Ovary (tissue), 10 donors: ENCODE measurements at regions of chr14 and their contacts with region 1.

Region 1: GRCh38 chr14:74612350-74613021 is 449 bp upstream of the LTBP2 start:
- DNase-seq: peak; percentile 82 to 92 (median 85)
- H3K4me3 ChIP-seq: peak overlapping the region; percentile 59
- H3K27ac ChIP-seq: peak overlapping the region; percentile 5 to 51
- H3K4me1 ChIP-seq: peaks cover 13% of the 10 kb centered on the region
- H3K27me3 ChIP-seq: no peaks in the 10 kb centered on the region
- CTCF ChIP-seq: peak; percentile 35 to 91 (median 84)
- EP300 ChIP-seq: no peak
- POLR2A ChIP-seq: no peak

Region 2: GRCh38 chr14:74362361-74362915 is 250.0 kb before region 1 on chr14:
- intact Hi-C with region 1: loop called in 1 of 4 experiments (anchors 5 kb)
- DNase-seq: peak; percentile 73 to 82 (median 76)
- H3K4me3 ChIP-seq: no peak overlapping the region
- H3K27ac ChIP-seq: no peak overlapping the region
- H3K4me1 ChIP-seq: no peaks in the 10 kb centered on the region
- H3K27me3 ChIP-seq: no peaks in the 10 kb centered on the region
- CTCF ChIP-seq: peak; percentile 75 to 84 (median 77)
- EP300 ChIP-seq: no peak
- POLR2A ChIP-seq: no peak

Region 3: DNA sequence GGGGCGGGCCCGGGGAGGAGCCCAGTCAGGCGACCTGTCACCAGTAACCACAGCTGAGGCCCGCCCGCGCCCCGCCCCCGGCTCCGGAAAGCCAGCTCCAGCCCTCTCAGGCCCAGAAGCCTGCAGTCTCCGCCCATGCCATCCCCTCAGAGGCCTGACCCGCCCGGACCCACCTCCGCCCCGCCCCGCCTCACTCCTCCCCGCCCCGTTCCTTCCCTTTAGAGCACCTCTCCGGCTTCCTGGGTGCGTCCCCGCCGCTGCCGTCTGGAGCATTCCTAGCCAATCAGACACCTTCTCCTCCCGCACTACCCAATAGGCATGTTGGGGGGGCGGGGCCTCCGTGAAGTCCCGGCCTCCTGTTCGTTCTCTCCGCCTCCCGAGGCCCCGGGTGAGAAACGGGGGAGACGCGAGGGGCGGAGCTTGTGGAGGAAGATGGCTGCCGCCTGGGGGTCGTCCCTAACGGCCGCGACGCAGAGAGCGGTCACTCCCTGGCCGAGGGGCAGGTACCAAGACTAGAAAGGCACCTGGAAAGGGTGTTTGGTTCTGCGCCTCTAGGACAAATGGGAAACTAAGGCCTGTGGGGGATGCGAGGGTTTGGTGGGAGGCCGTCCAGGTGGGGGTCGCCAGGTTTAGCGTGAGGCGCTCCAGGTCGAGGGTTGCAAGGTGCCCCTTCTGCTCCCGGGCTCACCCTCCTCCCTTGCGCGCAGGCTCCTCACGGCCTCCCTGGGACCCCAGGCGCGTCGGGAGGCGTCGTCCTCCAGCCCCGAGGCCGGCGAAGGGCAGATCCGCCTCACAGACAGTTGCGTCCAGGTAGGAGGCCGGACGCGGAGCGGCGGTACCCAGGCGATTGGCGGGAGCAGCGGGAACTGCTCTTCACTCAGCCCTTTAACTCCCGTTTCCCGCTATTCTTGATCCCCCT is 118.9 kb before region 1 on chr14 and contains the start of gene ISCA2:
- intact Hi-C with region 1: loop called in 1 of 4 experiments (anchors 5 kb)
- DNase-seq: peak; percentile 99
- H3K4me3 ChIP-seq: peak within 1 kb of the TSS; percentile 87
- H3K27ac ChIP-seq: peak within 1 kb of the TSS; percentile 80 to 82
- H3K4me1 ChIP-seq: peaks cover 5% of the 10 kb centered on the region
- H3K27me3 ChIP-seq: no peaks in the 10 kb centered on the region
- CTCF ChIP-seq: no peak
- EP300 ChIP-seq: no peak
- POLR2A ChIP-seq: peak; percentile 85
- total RNA-seq, gene ISCA2: 11.7 to 32.7 (median 26.9) TPM

Region 4: GRCh38 chr14:74501135-74501614 is 111.3 kb before region 1 on chr14:
- intact Hi-C with region 1: loop called in 2 of 4 experiments (anchors 5 kb)
- DNase-seq: peak; percentile 89 to 93 (median 92)
- H3K4me3 ChIP-seq: no peak overlapping the region
- H3K27ac ChIP-seq: no peak overlapping the region
- H3K4me1 ChIP-seq: peaks cover 3% of the 10 kb centered on the region
- H3K27me3 ChIP-seq: no peaks in the 10 kb centered on the region
- CTCF ChIP-seq: peak; percentile 73 to 81 (median 77)
- EP300 ChIP-seq: no peak
- POLR2A ChIP-seq: no peak

Region 5: GRCh38 chr14:74705613-74706500 is 93.4 kb after region 1 on chr14:
- intact Hi-C with region 1: loop called in 2 of 4 experiments (anchors 5 to 10 kb)
- DNase-seq: no peak
- H3K4me3 ChIP-seq: no peak overlapping the region
- H3K27ac ChIP-seq: peak overlapping the region in 1 of 2 donors; percentile 74
- H3K4me1 ChIP-seq: peaks cover 12% of the 10 kb centered on the region
- H3K27me3 ChIP-seq: no peaks in the 10 kb centered on the region
- CTCF ChIP-seq: no peak
- EP300 ChIP-seq: no peak
- POLR2A ChIP-seq: no peak

Region 6: GRCh38 chr14:74712499-74713394 is 100.3 kb after region 1 on chr14 and contains the starts of genes AREL1 and FCF1:
- intact Hi-C with region 1: loop called in 3 of 4 experiments (anchors 2 to 10 kb)
- DNase-seq: peak; percentile 74 to 85 (median 75)
- H3K4me3 ChIP-seq: peak within 1 kb of the TSS; percentile 86
- H3K27ac ChIP-seq: peak within 1 kb of the TSS; percentile 54 to 55
- H3K4me1 ChIP-seq: peaks cover 4% of the 10 kb centered on the region
- H3K27me3 ChIP-seq: no peaks in the 10 kb centered on the region
- CTCF ChIP-seq: no peak
- EP300 ChIP-seq: peak; percentile 27
- POLR2A ChIP-seq: peak; percentile 75
- total RNA-seq, gene AREL1: 14.8 to 38.1 (median 26.5) TPM
- total RNA-seq, gene FCF1: 19.8 to 60.8 (median 43.1) TPM

Region 7: GRCh38 chr14:74804219-74804826 is 191.8 kb after region 1 on chr14:
- intact Hi-C with region 1: loop called in 2 of 4 experiments (anchors 5 to 10 kb)
- DNase-seq: peak in 4 of 5 donors; percentile 16 to 53 (median 32)
- H3K4me3 ChIP-seq: no peak overlapping the region
- H3K27ac ChIP-seq: no peak overlapping the region
- H3K4me1 ChIP-seq: no peaks in the 10 kb centered on the region
- H3K27me3 ChIP-seq: no peaks in the 10 kb centered on the region
- CTCF ChIP-seq: peak; percentile 24 to 26 (median 24)
- EP300 ChIP-seq: no peak
- POLR2A ChIP-seq: no peak